Psoas muscle (tissue), 8 donors: ENCODE measurements at regions of chr1 and their contacts with region 1.

Region 1: DNA sequence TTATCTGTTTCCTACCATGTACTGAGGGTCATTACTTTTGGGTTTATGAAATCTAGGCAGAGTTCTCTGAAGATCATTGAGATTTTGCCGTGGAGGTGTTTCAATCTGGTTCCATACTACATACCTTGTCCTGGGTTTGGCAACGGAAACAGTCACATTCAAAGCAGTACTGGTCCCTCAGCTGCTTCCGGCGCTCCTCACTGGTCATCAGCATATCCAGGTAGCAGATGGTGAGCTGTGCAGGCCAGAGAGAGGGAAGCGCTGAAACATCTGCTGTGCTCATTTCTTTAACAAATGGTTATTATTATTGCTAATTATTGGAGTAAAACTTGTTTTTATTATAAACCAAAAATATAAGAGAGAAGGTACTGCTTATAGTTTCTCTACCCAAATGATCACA is 591.7 kb downstream of the SMYD3 start:
- DNase-seq: no peak
- ATAC-seq: no peak
- H3K4me3 ChIP-seq: no peak overlapping the region
- H3K27ac ChIP-seq: no peak overlapping the region
- H3K4me1 ChIP-seq: no peaks in the 10 kb centered on the region
- H3K27me3 ChIP-seq: no peaks in the 10 kb centered on the region
- CTCF ChIP-seq: no peak

Region 2: GRCh38 chr1:245245021-245245667 is 670.3 kb before region 1 on chr1:
- intact Hi-C with region 1: no loop called
- DNase-seq: no peak
- ATAC-seq: no peak
- H3K4me3 ChIP-seq: no peak overlapping the region
- H3K27ac ChIP-seq: no peak overlapping the region
- H3K4me1 ChIP-seq: no peaks in the 10 kb centered on the region
- H3K27me3 ChIP-seq: no peaks in the 10 kb centered on the region
- CTCF ChIP-seq: no peak

Region 3: GRCh38 chr1:245888809-245889208 is 26.6 kb before region 1 on chr1:
- intact Hi-C with region 1: no loop called
- DNase-seq: no peak
- ATAC-seq: no peak
- H3K4me3 ChIP-seq: no peak overlapping the region
- H3K27ac ChIP-seq: no peak overlapping the region
- H3K4me1 ChIP-seq: no peaks in the 10 kb centered on the region
- H3K27me3 ChIP-seq: no peaks in the 10 kb centered on the region
- CTCF ChIP-seq: no peak

Region 4: DNA sequence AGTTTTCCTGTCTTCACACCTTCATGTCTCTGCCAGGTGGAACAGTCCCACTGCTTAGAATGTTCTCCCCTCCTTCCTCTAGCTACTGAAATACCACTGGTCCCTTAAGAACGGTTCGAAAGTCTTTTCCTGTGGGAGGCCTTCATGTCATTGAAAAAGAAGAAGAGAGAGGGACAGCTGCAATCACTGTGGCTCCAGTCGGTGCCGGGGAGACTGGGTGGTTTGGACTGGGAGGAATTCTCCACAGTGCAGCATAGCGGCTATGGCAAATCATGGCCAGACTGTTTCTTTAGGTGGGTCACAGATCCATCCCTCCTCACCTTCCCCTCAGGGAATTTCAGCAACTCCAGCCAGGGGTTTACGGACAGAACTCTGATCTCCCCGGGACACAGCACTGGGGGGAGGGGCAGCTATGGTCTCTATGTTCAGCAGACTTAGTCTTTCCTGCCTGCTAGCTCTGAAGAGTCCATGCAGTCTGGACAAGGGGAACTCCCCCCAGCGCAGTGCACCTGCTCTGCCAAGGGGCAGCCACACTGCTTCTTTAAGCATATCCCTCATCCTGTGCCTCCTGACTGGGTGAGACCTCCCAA is 24.4 kb after region 1 on chr1:
- intact Hi-C with region 1: loop called in 1 of 2 experiments (anchors 2 kb)
- DNase-seq: no peak
- ATAC-seq: no peak
- H3K4me3 ChIP-seq: no peak overlapping the region
- H3K27ac ChIP-seq: no peak overlapping the region
- H3K4me1 ChIP-seq: no peaks in the 10 kb centered on the region
- H3K27me3 ChIP-seq: no peaks in the 10 kb centered on the region
- CTCF ChIP-seq: no peak